ENCODE measurements at regions of chr1 and their contacts with region 1.

Region 1: GRCh38 chr1:62407405-62408009 is 29.3 kb upstream of the USP1 start:
- DNase-seq: no peak
- H3K4me3 ChIP-seq: no peak overlapping the region
- H3K27ac ChIP-seq: no peak overlapping the region
- H3K4me1 ChIP-seq: no peaks in the 10 kb centered on the region
- H3K27me3 ChIP-seq: no peaks in the 10 kb centered on the region
- CTCF ChIP-seq: peak; percentile 94

Region 2: GRCh38 chr1:62241377-62242131 is 166.0 kb before region 1 on chr1:
- CTCF ChIA-PET with region 1: no interaction called
- POLR2A ChIA-PET with region 1: no interaction called
- intact Hi-C with region 1: no loop called
- DNase-seq: peak; percentile 56 to 57
- H3K4me3 ChIP-seq: no peak overlapping the region
- H3K27ac ChIP-seq: no peak overlapping the region
- H3K4me1 ChIP-seq: peaks cover 31% of the 10 kb centered on the region
- H3K27me3 ChIP-seq: no peaks in the 10 kb centered on the region
- CTCF ChIP-seq: no peak

Region 3: GRCh38 chr1:62294261-62294660 is 113.2 kb before region 1 on chr1:
- CTCF ChIA-PET with region 1: interaction called, 5 read pairs
- POLR2A ChIA-PET with region 1: no interaction called
- intact Hi-C with region 1: loop called (anchors 5 kb)
- DNase-seq: peak in 1 of 2 experiments; percentile 48
- H3K4me3 ChIP-seq: no peak overlapping the region
- H3K27ac ChIP-seq: no peak overlapping the region
- H3K4me1 ChIP-seq: no peaks in the 10 kb centered on the region
- H3K27me3 ChIP-seq: no peaks in the 10 kb centered on the region
- CTCF ChIP-seq: peak; percentile 63